SK-N-SH (cell line): ENCODE measurements at regions of chr7 and their contacts with region 1.

Region 1: GRCh38 chr7:124784879-124785818 is 19.6 kb upstream of the GPR37 start:
- DNase-seq: peak; percentile 76
- H3K4me3 ChIP-seq: no peak overlapping the region; a peak in 1 of 4 replicates
- H3K27ac ChIP-seq: no peak overlapping the region
- H3K4me1 ChIP-seq: no peaks in the 10 kb centered on the region
- H3K27me3 ChIP-seq: no peaks in the 10 kb centered on the region
- CTCF ChIP-seq: peak; percentile 98
- EP300 ChIP-seq: no peak; a peak in 1 of 4 replicates
- RAD21 ChIP-seq: peak; percentile 100

Region 2: DNA sequence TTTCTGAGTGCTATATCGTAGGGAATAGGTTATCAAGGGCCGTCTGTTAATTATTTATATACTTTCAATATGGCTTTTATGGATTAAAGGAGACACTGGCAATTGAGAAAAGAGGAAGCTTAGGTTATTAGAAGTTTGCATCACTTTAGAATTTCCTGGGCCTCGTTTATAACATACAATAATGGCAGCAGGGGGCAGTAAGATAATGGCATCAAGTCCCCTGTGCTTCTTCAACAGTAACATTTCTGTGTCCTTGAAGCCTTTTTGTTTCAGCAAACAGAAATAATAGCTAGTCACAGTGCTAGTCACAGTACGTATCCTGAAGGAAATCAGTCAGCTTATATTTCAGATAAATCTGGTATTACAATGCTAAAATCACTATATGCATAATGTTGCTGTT is 818.2 kb before region 1 on chr7:
- CTCF ChIA-PET with region 1: interaction called, 17 read pairs
- POLR2A ChIA-PET with region 1: no interaction called
- DNase-seq: no peak
- H3K4me3 ChIP-seq: no peak overlapping the region; a peak in 1 of 4 replicates
- H3K27ac ChIP-seq: no peak overlapping the region
- H3K4me1 ChIP-seq: no peaks in the 10 kb centered on the region
- H3K27me3 ChIP-seq: no peaks in the 10 kb centered on the region
- CTCF ChIP-seq: peak; percentile 48
- EP300 ChIP-seq: no peak
- RAD21 ChIP-seq: peak; percentile 89

Region 3: GRCh38 chr7:124162667-124163066 is 622.5 kb before region 1 on chr7:
- CTCF ChIA-PET with region 1: interaction called, 54 read pairs
- POLR2A ChIA-PET with region 1: no interaction called
- DNase-seq: no peak
- H3K4me3 ChIP-seq: no peak overlapping the region
- H3K27ac ChIP-seq: no peak overlapping the region
- H3K4me1 ChIP-seq: peaks cover 0 to 2% of the 10 kb centered on the region in 2 experiments; a peak in 2 of 4 replicates
- H3K27me3 ChIP-seq: no peaks in the 10 kb centered on the region
- CTCF ChIP-seq: no peak
- EP300 ChIP-seq: no peak
- RAD21 ChIP-seq: no peak

Region 4: GRCh38 chr7:124188576-124188975 is 596.6 kb before region 1 on chr7:
- CTCF ChIA-PET with region 1: interaction called, 11 read pairs
- POLR2A ChIA-PET with region 1: no interaction called
- DNase-seq: no peak
- H3K4me3 ChIP-seq: no peak overlapping the region
- H3K27ac ChIP-seq: no peak overlapping the region
- H3K4me1 ChIP-seq: peaks cover 0 to 3% of the 10 kb centered on the region in 2 experiments; a peak in 1 of 4 replicates
- H3K27me3 ChIP-seq: no peaks in the 10 kb centered on the region
- CTCF ChIP-seq: no peak
- EP300 ChIP-seq: no peak
- RAD21 ChIP-seq: no peak

Region 5: DNA sequence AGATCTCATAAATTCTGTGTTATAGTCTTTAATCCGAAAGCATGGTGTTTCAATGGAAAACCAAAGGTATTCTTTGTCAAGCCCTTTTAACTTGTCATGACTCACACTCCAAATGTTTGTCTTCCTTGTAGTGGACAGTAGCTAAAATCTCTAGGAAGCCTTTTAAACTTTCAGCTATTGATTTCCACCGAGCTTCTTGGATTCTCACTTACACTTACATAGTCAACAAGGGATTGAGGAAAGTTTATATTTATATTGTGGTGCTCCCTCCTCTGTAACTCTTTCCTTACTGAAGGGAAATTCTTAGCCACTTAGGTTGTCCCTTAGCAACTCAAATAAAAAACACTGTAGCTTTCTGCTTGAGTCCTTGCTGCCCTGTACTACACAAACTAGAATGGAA is 11.6 kb after region 1 on chr7:
- CTCF ChIA-PET with region 1: interaction called, 21 read pairs
- POLR2A ChIA-PET with region 1: no interaction called
- DNase-seq: no peak
- H3K4me3 ChIP-seq: no peak overlapping the region
- H3K27ac ChIP-seq: no peak overlapping the region
- H3K4me1 ChIP-seq: peaks cover 0 to 6% of the 10 kb centered on the region in 2 experiments; a peak in 3 of 4 replicates
- H3K27me3 ChIP-seq: no peaks in the 10 kb centered on the region
- CTCF ChIP-seq: no peak
- EP300 ChIP-seq: no peak
- RAD21 ChIP-seq: no peak